ENCODE measurements at regions of chr9 and their contacts with region 1.

Region 1: GRCh38 chr9:30661925-30662324 is 1722.5 kb upstream of the ACO1 start:
- DNase-seq: no peak
- ATAC-seq: no peak
- H3K4me3 ChIP-seq: no peak overlapping the region
- H3K27ac ChIP-seq: no peak overlapping the region
- H3K4me1 ChIP-seq: no peaks in the 10 kb centered on the region
- H3K27me3 ChIP-seq: no peaks in the 10 kb centered on the region

Region 2: GRCh38 chr9:30723656-30724055 is 61.7 kb after region 1 on chr9:
- intact Hi-C with region 1: loop called in 1 of 4 experiments (anchors 10 kb)
- DNase-seq: peak in 1 of 3 donors; percentile 3
- ATAC-seq: no peak
- H3K4me3 ChIP-seq: no peak overlapping the region
- H3K27ac ChIP-seq: no peak overlapping the region
- H3K4me1 ChIP-seq: no peaks in the 10 kb centered on the region
- H3K27me3 ChIP-seq: no peaks in the 10 kb centered on the region

Measured in right cardiac atrium (tissue), 5 donors.